ENCODE measurements at regions of chr17 and their contacts with region 1.

Region 1: GRCh38 chr17:4366327-4367063 is at the start of gene UBE2G1:
- DNase-seq: peak; percentile 99
- ATAC-seq: peak; percentile 86
- H3K4me3 Mint-ChIP-seq: peak within 1 kb of the TSS; percentile 65
- H3K27ac Mint-ChIP-seq: peak within 1 kb of the TSS; percentile 90
- H3K4me1 Mint-ChIP-seq: peaks cover 29% of the 10 kb centered on the region
- H3K27me3 Mint-ChIP-seq: no peaks in the 10 kb centered on the region
- total RNA-seq, gene UBE2G1: 51.0 to 52.9 TPM

Region 2: DNA sequence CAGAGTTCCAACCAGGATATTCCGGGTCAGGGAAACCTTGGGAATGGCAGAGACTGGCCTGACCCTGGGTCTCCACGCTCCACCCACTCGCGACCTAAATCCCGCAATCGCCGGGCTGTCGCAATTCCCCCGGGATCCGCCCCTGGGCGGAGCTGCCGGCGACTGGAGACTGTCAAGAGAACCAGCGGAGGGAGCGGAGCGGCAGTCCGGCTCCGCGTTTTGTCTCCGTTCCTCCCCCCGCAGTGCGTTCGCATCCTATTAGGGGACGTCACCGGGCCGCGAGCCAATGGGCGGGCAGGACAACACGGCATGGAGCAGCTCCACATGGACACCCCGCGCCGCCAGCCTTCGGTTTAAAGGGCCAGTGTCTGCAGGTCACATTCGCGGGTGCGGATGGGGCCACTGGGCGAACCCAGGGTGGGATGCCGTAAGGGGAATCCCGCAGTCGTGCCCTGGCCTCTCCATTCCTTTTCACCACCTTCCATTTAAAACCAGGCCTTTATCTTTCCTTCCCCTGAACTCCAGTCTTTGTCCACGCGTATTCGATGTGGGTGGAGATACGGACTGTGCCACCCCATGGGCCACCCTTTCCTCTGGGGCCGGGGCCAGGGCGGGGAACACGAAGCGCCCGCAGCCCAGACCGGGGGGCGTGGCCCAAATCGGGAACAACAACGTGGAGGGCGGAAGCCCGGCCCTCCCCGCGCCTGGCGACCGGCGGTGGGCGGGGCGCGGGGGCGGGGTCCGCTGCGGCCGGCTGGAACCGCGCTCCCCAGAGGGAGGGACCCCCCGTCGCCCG is 1964.9 kb before region 1 on chr17:
- CTCF ChIA-PET with region 1: no interaction called
- POLR2A ChIA-PET with region 1: no interaction called
- intact Hi-C with region 1: loop called in 1 of 2 experiments (anchors 5 kb)
- DNase-seq: peak; percentile 100
- ATAC-seq: peak; percentile 59
- H3K4me3 Mint-ChIP-seq: peak overlapping the region; percentile 88
- H3K27ac Mint-ChIP-seq: peak overlapping the region; percentile 99
- H3K4me1 Mint-ChIP-seq: peaks cover 43% of the 10 kb centered on the region
- H3K27me3 Mint-ChIP-seq: no peaks in the 10 kb centered on the region

Region 3: GRCh38 chr17:3893003-3893719 is 473.3 kb before region 1 on chr17 and contains the start of gene CAMKK1:
- CTCF ChIA-PET with region 1: no interaction called
- POLR2A ChIA-PET with region 1: no interaction called
- intact Hi-C with region 1: loop called in 1 of 2 experiments (anchors 2 kb)
- DNase-seq: peak; percentile 94
- ATAC-seq: peak; percentile 88
- H3K4me3 Mint-ChIP-seq: peak within 1 kb of the TSS; percentile 76
- H3K27ac Mint-ChIP-seq: peak within 1 kb of the TSS; percentile 77
- H3K4me1 Mint-ChIP-seq: peaks cover 36% of the 10 kb centered on the region
- H3K27me3 Mint-ChIP-seq: no peaks in the 10 kb centered on the region
- total RNA-seq, gene CAMKK1: 4.5 to 5.4 TPM

Region 4: DNA sequence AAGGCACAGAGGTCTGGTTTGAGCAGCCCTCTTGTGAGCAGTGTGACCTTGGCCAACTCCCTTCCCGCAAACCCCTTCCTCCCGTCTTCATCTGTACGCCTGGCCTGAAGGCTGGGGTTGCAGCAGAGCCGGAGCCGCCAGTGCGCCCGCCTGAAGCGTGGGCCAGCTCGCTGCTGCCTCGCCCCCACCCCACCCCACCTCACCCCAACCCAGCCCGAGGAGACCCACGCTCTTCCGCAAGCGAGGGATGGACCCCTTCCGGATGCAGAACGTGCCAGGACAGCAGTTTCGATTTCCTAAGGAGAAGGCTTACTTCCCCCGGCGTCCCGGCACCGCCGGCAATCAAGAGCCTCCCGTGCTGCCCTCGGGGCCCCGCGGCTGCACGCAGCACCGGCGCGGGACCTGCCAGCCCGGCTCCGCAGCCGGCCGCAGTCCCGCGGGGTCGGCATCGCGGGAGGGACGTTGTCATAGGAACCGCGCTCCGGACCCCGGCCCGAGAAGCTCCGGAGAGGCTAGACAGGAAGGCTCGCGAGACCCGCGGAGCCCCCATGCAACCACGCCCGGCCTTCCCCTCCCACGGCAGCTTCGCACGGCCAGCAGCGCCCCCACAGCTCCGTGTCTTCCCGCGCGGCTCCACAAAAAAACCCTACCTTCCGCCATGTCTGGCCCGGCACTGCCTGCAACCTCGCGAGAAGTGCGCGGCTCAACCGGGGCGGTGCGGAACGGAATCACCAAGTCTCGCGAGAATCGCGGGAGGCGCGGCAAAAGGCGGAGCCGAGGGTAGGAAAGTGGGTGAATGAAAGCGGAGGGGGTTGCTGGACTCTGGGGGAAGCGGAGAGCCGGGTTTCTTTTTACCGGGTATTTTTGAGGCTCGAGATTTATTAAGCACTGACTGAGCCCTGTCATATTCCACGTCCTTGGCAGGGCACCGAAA is 102.9 kb before region 1 on chr17 and contains the start of gene ANKFY1:
- CTCF ChIA-PET with region 1: no interaction called
- POLR2A ChIA-PET with region 1: no interaction called
- intact Hi-C with region 1: loop called (anchors 1 to 5 kb)
- DNase-seq: peak; percentile 99
- ATAC-seq: peak; percentile 99
- H3K4me3 Mint-ChIP-seq: peak within 1 kb of the TSS; percentile 97
- H3K27ac Mint-ChIP-seq: peak within 1 kb of the TSS; percentile 96
- H3K4me1 Mint-ChIP-seq: peaks cover 35% of the 10 kb centered on the region
- H3K27me3 Mint-ChIP-seq: no peaks in the 10 kb centered on the region
- total RNA-seq, gene ANKFY1: 39.8 to 40.7 TPM

Region 5: GRCh38 chr17:4293572-4293971 is 72.9 kb before region 1 on chr17:
- CTCF ChIA-PET with region 1: no interaction called
- POLR2A ChIA-PET with region 1: no interaction called
- intact Hi-C with region 1: no loop called
- DNase-seq: no peak
- ATAC-seq: no peak
- H3K4me3 Mint-ChIP-seq: no peak overlapping the region
- H3K27ac Mint-ChIP-seq: no peak overlapping the region
- H3K4me1 Mint-ChIP-seq: peaks cover 7% of the 10 kb centered on the region
- H3K27me3 Mint-ChIP-seq: no peaks in the 10 kb centered on the region

Region 6: GRCh38 chr17:4709794-4710692 is 343.5 kb after region 1 on chr17 and contains the start of gene ARRB2:
- CTCF ChIA-PET with region 1: no interaction called
- POLR2A ChIA-PET with region 1: no interaction called
- intact Hi-C with region 1: loop called in 1 of 2 experiments (anchors 1 kb)
- DNase-seq: peak; percentile 99
- ATAC-seq: peak; percentile 83
- H3K4me3 Mint-ChIP-seq: peak within 1 kb of the TSS; percentile 82
- H3K27ac Mint-ChIP-seq: peak within 1 kb of the TSS; percentile 90
- H3K4me1 Mint-ChIP-seq: peaks cover 52% of the 10 kb centered on the region
- H3K27me3 Mint-ChIP-seq: no peaks in the 10 kb centered on the region
- total RNA-seq, gene ARRB2: 168 to 175 TPM

Region 7: DNA sequence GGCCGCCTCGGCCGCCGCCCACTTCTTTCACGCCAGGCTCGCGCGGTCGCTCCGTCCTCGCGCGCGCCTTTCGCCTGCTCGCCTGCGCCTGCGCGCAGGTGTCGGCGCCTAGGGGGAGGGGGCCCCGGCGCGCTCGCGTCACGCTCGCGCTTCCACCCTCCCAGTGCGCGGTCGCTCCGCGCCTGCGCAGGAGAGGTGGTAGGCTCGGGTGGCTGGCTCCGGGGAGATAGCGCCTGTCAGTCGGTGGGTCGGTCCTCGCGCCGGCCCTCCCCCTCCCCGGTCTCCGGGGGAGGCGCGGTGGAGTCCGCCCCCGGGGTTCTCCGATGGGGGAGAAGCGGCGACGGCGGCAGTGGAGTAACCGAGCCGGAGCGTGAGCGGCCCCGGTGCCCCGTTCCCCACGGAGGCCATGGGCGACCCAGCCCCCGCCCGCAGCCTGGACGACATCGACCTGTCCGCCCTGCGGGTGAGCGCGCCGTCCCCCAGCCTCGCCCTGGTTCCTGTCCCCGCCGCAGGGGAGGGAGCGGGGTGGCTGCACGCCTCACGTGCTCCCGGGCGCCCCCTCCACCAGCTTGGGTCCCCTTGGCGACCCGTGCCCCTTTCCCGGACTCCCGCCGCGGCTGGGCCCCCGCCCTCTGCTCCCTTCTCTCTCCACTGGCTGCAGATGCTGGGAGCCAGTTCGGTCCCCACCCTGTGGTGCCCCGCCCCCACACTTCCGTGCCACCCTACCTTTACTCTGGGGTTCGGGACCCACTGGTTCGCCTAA is 466.9 kb after region 1 on chr17 and contains the start of gene MINK1:
- CTCF ChIA-PET with region 1: no interaction called
- POLR2A ChIA-PET with region 1: no interaction called
- intact Hi-C with region 1: loop called in 1 of 2 experiments (anchors 1 kb)
- DNase-seq: peak; percentile 92
- ATAC-seq: peak; percentile 93
- H3K4me3 Mint-ChIP-seq: peak within 1 kb of the TSS; percentile 90
- H3K27ac Mint-ChIP-seq: peak within 1 kb of the TSS; percentile 91
- H3K4me1 Mint-ChIP-seq: peaks cover 28% of the 10 kb centered on the region
- H3K27me3 Mint-ChIP-seq: no peaks in the 10 kb centered on the region
- total RNA-seq, gene MINK1: 48.2 to 57.7 TPM

Measured in activated CD4-positive, alpha-beta T cell treated with anti-CD3 and anti-CD28 coated beads for 36 hours (primary cell).